ENCODE measurements at regions of chr3 and their contacts with region 1.

Region 1: DNA sequence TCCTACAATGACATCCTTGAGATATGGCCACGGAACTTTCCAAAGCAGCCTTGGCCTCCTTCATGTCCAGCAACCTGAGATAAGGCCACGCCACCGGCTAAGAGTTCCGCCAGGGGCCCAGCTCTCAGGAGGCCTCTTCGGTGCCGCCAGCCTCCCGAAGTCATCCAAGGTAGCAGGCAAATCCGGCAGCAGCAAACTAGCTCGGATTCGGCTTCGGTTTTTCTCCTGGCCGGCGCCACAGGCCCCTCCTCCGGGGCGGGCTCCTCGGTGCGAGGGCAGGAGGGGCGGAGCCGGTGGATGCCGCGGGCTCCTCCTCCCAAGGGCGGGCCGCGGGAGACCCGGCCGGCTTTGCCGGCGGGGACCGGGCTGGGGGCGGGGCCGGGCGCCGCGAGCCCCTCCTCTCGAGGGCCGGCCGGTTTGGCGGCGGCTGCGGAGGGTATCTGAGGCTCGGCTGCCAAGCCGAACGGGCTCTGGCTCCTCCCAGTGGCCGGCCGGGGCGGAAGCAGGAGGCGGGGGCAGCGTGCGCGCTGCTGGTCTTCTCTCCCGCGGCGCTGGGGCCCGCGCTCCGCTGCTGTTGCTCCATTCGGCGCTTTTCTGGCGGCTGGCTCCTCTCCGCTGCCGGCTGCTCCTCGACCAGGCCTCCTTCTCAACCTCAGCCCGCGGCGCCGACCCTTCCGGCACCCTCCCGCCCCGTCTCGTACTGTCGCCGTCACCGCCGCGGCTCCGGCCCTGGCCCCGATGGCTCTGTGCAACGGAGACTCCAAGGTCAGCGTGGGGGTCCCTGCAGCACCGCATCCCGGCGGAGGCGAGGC is at the start of gene GMPS:
- H3K4me3 Mint-ChIP-seq: peak within 1 kb of the TSS; percentile 95
- H3K27ac Mint-ChIP-seq: peak within 1 kb of the TSS; percentile 93
- H3K4me1 Mint-ChIP-seq: peaks cover 13% of the 10 kb centered on the region
- H3K27me3 Mint-ChIP-seq: no peaks in the 10 kb centered on the region

Region 2: DNA sequence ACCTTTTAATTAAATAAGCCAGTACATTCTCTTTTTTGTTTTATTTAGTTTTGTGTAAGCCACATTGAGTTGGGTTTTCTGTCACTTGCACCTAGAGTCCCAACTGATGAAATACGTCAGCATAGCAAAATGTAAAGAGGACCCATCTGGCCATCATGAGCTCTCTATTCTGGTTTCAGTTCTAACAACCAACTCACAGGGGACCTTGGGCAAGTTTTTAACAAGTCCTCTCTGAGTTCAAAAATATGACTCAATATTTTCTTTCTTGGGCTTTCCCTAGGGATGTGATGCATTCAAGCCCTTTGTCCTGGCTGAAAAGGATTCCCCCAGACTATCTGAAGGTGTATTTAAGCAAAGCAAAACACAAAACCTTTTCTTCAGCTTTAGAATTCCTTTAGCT is 158.3 kb before region 1 on chr3:
- intact Hi-C with region 1: no loop called
- H3K4me3 Mint-ChIP-seq: no peak overlapping the region
- H3K27ac Mint-ChIP-seq: no peak overlapping the region
- H3K4me1 Mint-ChIP-seq: no peaks in the 10 kb centered on the region
- H3K27me3 Mint-ChIP-seq: no peaks in the 10 kb centered on the region

Region 3: GRCh38 chr3:155805802-155806618 is 64.3 kb before region 1 on chr3 and contains the start of gene C3orf33:
- intact Hi-C with region 1: loop called (anchors 1 kb)
- H3K4me3 Mint-ChIP-seq: peak within 1 kb of the TSS; percentile 92
- H3K27ac Mint-ChIP-seq: peak within 1 kb of the TSS; percentile 92
- H3K4me1 Mint-ChIP-seq: no peaks in the 10 kb centered on the region
- H3K27me3 Mint-ChIP-seq: no peaks in the 10 kb centered on the region

Region 4: GRCh38 chr3:156189927-156190326 is 319.6 kb after region 1 on chr3:
- intact Hi-C with region 1: no loop called
- H3K4me3 Mint-ChIP-seq: no peak overlapping the region
- H3K27ac Mint-ChIP-seq: no peak overlapping the region
- H3K4me1 Mint-ChIP-seq: no peaks in the 10 kb centered on the region
- H3K27me3 Mint-ChIP-seq: no peaks in the 10 kb centered on the region